AG04449 (cell line): ENCODE measurements at regions of chr2 and their contacts with region 1.

Region 1: DNA sequence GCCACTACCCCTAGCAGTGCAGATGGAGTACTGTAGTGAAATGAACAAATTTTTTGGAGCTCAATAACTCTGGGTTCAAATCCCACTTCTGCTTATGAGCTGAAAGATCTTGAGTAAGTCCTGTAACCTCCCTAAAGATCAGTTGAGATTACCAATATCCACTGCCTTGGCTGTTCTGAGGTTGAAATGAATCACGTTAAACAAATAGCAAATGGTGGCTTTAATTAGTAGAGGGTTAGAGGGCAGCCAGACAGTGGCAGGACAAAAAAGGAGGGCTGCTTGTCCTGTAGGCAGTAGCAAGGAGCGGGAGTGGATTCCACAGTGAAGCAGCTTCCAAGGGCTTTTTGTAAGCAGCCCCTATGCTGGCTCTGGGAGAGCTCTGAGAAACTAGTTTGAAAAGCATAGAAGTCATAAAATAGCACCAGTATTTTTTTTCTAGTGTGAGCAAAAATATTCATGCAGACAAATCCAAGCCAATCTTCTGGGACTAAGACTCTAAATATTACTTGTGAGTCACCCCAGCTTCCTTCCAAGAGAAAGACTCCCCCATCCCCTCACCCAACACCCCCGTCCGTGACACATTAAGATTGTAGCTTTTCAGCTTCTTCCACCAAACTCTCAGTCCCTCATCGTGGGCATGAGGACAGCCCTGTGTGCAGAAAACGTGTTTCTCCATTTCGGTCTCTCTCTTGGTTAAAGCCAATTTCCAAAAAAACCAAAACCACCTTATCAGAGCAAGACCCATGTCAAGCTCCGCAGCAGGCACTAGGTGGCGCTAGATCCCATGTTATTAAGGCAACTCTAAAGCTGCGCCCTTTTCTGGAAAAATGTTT is 123.5 kb upstream of the LGALSL start:
- DNase-seq: peak; percentile 46
- H3K4me3 ChIP-seq: peak overlapping the region; percentile 52
- CTCF ChIP-seq: peak; percentile 83

Region 2: GRCh38 chr2:64318476-64318748 is 12.1 kb before region 1 on chr2:
- CTCF ChIA-PET with region 1: interaction called, 112 read pairs
- POLR2A ChIA-PET with region 1: no interaction called
- DNase-seq: no peak
- H3K4me3 ChIP-seq: no peak overlapping the region
- CTCF ChIP-seq: no peak

Region 3: GRCh38 chr2:64478502-64479252 is 148.2 kb after region 1 on chr2:
- CTCF ChIA-PET with region 1: interaction called, 315 read pairs
- POLR2A ChIA-PET with region 1: interaction called, 3 read pairs
- DNase-seq: no peak
- H3K4me3 ChIP-seq: no peak overlapping the region
- CTCF ChIP-seq: no peak

Region 4: GRCh38 chr2:64516628-64517510 is 186.4 kb after region 1 on chr2:
- CTCF ChIA-PET with region 1: interaction called, 16 read pairs
- POLR2A ChIA-PET with region 1: no interaction called
- DNase-seq: no peak
- H3K4me3 ChIP-seq: no peak overlapping the region
- CTCF ChIP-seq: no peak

Region 5: DNA sequence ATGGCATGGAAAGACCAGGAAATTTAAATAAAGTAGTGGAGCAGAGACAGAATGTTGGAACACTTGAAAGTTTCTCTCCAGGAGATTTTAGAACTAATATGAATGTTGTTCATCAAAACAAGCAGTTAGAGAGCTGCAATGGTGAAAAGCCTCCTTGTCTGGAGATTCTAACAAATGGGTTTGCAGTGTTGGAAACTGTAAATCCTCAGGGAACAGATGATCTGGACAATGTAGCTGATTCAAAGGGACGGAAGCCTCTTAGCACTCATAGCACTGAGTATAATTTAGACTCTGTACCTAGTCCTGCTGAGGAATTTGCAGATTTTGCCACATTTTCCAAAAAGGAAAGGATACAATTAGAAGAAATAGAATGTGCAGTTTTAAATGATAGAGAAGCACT is 221.4 kb after region 1 on chr2:
- CTCF ChIA-PET with region 1: interaction called, 194 read pairs
- POLR2A ChIA-PET with region 1: no interaction called
- DNase-seq: no peak
- H3K4me3 ChIP-seq: no peak overlapping the region
- CTCF ChIP-seq: no peak

Region 6: GRCh38 chr2:64595397-64596160 is 265.1 kb after region 1 on chr2:
- CTCF ChIA-PET with region 1: interaction called, 12 read pairs
- POLR2A ChIA-PET with region 1: no interaction called
- DNase-seq: no peak
- H3K4me3 ChIP-seq: no peak overlapping the region
- CTCF ChIP-seq: peak; percentile 12